Activated CD4-positive, alpha-beta memory T cell treated with anti-CD3 and anti-CD28 coated beads for 36 hours (primary cell): ENCODE measurements at regions of chr2 and their contacts with region 1.

Region 1: GRCh38 chr2:6877402-6878304 is at the start of gene RSAD2:
- DNase-seq: peak; percentile 39
- H3K4me3 Mint-ChIP-seq: peak within 1 kb of the TSS; percentile 56
- H3K27ac Mint-ChIP-seq: peak within 1 kb of the TSS; percentile 15
- H3K4me1 Mint-ChIP-seq: peaks cover 52% of the 10 kb centered on the region
- H3K27me3 Mint-ChIP-seq: peaks cover 2% of the 10 kb centered on the region
- total RNA-seq, gene RSAD2: 7.9 to 8.6 TPM

Region 2: GRCh38 chr2:6791679-6792078 is 86.0 kb before region 1 on chr2:
- CTCF ChIA-PET with region 1: no interaction called
- POLR2A ChIA-PET with region 1: no interaction called
- intact Hi-C with region 1: no loop called
- DNase-seq: no peak
- H3K4me3 Mint-ChIP-seq: no peak overlapping the region
- H3K27ac Mint-ChIP-seq: no peak overlapping the region
- H3K4me1 Mint-ChIP-seq: no peaks in the 10 kb centered on the region
- H3K27me3 Mint-ChIP-seq: peaks cover 4% of the 10 kb centered on the region

Region 3: DNA sequence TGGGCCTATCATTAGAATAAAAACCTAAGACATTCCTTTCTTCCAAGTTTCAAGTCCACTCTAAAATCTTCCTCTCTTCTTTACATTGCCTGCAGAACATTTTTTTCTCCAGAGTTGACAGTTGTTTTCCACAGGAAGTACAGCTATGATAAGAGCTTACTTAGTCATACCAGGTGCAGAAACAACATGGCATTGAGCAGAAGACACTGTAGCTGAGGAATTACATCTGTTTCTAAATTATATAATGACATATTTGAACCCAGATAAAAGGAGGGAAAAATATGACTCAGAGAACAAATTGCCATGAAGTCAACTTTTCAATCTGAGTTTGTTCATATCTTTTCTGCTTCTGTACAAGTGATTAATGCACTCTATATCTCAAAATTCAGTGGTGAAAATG is 42.2 kb before region 1 on chr2:
- CTCF ChIA-PET with region 1: no interaction called
- POLR2A ChIA-PET with region 1: no interaction called
- intact Hi-C with region 1: loop called (anchors 1 kb)
- DNase-seq: no peak
- H3K4me3 Mint-ChIP-seq: no peak overlapping the region
- H3K27ac Mint-ChIP-seq: no peak overlapping the region
- H3K4me1 Mint-ChIP-seq: peaks cover 14% of the 10 kb centered on the region
- H3K27me3 Mint-ChIP-seq: no peaks in the 10 kb centered on the region

Region 4: DNA sequence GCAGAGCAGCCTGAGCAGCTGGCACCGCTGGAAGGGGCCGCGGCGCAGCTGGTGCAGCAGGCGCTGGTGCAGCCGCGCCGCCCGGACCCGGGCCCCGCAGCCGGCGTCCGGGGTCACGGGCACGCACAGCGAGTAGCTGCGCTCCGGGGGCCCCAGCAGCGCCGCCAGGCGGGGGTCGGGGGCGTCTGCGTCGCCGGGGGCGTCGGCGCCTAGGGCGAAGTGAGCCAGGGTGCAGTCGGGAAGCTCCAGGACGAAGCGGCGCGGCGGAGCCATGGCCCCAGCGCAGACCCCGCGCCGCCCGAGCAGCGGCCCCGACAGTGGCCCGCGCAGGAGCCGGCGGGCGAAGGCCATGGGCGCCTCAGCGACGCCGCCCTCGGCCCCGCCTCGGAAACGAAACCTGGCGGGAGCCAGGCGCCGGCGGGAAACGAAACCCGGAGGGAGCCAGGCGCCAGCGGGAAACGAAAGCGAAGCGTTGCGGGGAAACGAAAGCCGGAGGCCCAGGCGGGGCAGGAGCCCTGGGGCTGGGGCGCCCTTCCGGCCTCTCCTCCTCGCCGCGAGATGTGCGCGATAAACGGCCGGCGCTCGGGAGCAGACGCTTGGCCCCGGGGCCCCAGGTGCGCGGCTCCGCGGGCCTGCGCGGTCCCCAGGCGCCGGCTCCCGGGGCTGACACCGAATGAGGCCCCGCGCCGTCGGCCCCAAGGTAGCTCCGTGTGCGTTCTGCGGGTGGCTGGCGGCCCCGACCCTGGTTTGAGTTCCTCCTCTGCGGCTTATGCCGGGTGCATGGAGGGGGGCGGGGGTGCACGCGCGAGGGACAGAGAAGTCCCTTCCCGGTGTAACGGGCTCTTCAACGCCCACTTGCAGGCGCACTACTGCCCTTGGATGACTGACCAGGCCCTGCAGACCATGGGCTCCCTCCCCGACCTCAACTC is 12.0 kb before region 1 on chr2 and contains the start of gene CMPK2:
- CTCF ChIA-PET with region 1: interaction called, 40 read pairs
- POLR2A ChIA-PET with region 1: interaction called, 6 read pairs
- intact Hi-C with region 1: loop called (anchors 1 kb)
- DNase-seq: peak; percentile 84
- H3K4me3 Mint-ChIP-seq: peak within 1 kb of the TSS; percentile 92
- H3K27ac Mint-ChIP-seq: peak within 1 kb of the TSS; percentile 85
- H3K4me1 Mint-ChIP-seq: peaks cover 7% of the 10 kb centered on the region
- H3K27me3 Mint-ChIP-seq: peaks cover 2% of the 10 kb centered on the region
- total RNA-seq, gene CMPK2: 6.6 to 6.8 TPM

Region 5: GRCh38 chr2:6909431-6910385 is 32.1 kb after region 1 on chr2:
- CTCF ChIA-PET with region 1: interaction called, 3 read pairs
- POLR2A ChIA-PET with region 1: interaction called, 3 read pairs
- intact Hi-C with region 1: loop called (anchors 2 kb)
- DNase-seq: peak; percentile 48
- H3K4me3 Mint-ChIP-seq: peak overlapping the region; percentile 23
- H3K27ac Mint-ChIP-seq: peak overlapping the region; percentile 66
- H3K4me1 Mint-ChIP-seq: peaks cover 84% of the 10 kb centered on the region
- H3K27me3 Mint-ChIP-seq: no peaks in the 10 kb centered on the region